Activated CD4-positive, alpha-beta T cell treated with anti-CD3 and anti-CD28 coated beads, Interleukin-2, amount 10 ng/mL, durations not matched to agents 24 days and 14 days (primary cell): ENCODE measurements at regions of chr3 and their contacts with region 1.

Region 1: DNA sequence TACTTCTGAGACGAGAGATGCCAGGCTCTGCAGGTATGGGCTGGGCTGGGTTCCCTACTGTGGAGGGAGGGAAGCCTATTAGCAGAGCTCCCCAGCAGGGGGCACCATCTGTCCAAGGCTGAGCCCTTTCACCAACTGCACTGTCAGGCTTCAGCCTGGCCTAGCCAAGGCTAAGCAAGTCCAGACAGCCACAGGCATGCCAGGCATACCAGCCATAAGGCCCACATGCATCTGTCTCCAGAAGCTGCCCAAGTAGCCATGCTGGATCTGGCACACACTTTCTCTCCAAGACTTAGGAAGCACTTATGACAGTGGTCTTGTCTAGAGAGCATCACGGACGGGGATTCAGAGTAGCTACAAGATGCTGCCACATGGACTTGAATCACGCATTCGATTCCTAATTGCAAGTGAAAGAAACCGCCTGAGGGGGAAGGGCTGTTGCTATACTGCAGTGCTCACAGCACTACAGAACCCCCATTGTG is 28.3 kb downstream of the RUVBL1 start:
- DNase-seq: peak; percentile 93
- H3K4me3 Mint-ChIP-seq: peak overlapping the region; percentile 36
- H3K27ac Mint-ChIP-seq: no peak overlapping the region
- H3K4me1 Mint-ChIP-seq: peaks cover 15% of the 10 kb centered on the region
- H3K27me3 Mint-ChIP-seq: no peaks in the 10 kb centered on the region

Region 2: DNA sequence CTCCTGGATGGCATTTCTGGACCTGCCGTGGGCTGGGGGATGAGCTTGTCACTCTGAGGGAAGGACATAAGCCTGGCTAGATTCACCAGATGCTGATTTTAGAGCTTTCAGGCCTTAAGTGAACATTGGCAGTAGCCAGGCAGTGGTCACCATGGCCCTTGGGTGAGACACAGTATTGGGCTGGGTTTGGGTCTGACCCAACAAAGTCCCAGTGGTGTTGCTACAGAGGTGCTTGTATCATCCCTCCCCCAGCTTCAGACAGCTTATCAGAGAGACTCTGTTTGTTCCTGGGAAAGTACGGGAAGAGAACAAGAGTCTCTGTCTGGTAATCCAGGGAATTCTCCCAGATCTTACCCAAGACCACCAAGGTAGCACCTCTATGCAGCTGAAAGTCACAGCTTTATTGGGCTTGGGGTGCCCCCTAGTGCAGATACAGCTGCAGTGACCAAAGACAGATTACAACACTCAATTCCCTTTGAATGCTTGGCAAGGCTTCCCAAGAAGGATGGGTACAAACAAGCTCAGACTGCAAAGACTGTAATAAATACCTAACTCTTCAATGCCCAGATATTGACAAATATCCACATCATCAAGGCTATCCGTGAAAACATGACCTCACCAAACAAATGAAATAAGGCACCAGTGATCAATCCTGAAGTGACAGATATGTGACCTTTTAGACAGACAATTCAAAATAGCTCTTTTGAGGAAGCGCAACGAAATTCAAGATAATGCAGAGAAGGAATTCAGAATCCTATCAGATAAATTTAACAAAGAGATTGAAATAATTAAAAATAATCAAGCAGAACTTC is 38.2 kb after region 1 on chr3:
- intact Hi-C with region 1: loop called (anchors 1 kb)
- DNase-seq: peak; percentile 83
- H3K4me3 Mint-ChIP-seq: no peak overlapping the region
- H3K27ac Mint-ChIP-seq: no peak overlapping the region
- H3K4me1 Mint-ChIP-seq: no peaks in the 10 kb centered on the region
- H3K27me3 Mint-ChIP-seq: peaks cover 29% of the 10 kb centered on the region

Region 3: DNA sequence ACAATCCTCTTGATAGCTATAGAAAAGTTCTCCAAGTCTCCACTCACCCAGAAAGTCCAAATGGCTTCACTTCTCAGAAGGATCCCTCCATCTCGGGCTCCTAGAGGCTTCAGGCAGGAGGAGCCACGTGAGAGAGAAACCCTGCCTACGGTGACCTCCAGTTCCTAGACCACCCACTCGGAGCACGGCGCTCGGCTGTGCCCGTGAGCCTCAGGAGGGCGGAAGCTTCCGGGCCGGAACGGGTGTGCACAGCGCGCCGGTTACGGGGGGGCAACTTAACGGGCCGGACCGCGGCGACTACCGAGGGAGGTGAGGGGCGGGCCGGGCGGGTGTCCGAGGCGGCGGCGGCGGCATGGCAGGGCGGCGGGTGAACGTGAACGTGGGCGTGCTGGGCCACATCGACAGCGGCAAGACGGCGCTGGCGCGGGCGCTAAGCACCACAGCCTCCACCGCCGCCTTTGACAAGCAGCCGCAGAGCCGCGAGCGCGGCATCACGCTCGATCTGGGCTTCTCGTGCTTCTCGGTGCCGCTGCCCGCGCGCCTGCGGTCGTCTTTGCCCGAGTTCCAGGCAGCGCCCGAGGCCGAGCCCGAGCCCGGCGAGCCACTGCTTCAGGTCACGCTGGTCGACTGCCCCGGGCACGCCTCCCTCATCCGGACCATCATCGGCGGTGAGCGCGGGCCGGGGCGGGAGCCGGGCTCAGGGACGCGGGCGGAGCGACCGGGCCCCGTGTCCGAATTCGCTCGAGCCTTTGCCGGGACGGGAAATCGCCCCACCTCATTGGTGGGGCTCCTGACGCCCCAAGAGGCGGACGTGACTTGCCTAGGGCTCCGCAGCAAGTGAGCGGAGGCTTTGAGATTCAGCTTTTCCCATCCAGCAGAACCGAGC is 58.1 kb after region 1 on chr3 and contains the start of gene EEFSEC:
- intact Hi-C with region 1: no loop called
- DNase-seq: peak; percentile 96
- H3K4me3 Mint-ChIP-seq: peak within 1 kb of the TSS; percentile 89
- H3K27ac Mint-ChIP-seq: peak within 1 kb of the TSS; percentile 95
- H3K4me1 Mint-ChIP-seq: peaks cover 17% of the 10 kb centered on the region
- H3K27me3 Mint-ChIP-seq: no peaks in the 10 kb centered on the region
- total RNA-seq, gene EEFSEC: 19.2 and 21.3 TPM in 2 replicates

Region 4: GRCh38 chr3:128322066-128323022 is 227.1 kb after region 1 on chr3:
- intact Hi-C with region 1: loop called (anchors 1 kb)
- DNase-seq: peak; percentile 87
- H3K4me3 Mint-ChIP-seq: no peak overlapping the region
- H3K27ac Mint-ChIP-seq: no peak overlapping the region
- H3K4me1 Mint-ChIP-seq: peaks cover 16% of the 10 kb centered on the region
- H3K27me3 Mint-ChIP-seq: no peaks in the 10 kb centered on the region